BJ (cell line): ENCODE measurements at regions of chr9 and their contacts with region 1.

Region 1: DNA sequence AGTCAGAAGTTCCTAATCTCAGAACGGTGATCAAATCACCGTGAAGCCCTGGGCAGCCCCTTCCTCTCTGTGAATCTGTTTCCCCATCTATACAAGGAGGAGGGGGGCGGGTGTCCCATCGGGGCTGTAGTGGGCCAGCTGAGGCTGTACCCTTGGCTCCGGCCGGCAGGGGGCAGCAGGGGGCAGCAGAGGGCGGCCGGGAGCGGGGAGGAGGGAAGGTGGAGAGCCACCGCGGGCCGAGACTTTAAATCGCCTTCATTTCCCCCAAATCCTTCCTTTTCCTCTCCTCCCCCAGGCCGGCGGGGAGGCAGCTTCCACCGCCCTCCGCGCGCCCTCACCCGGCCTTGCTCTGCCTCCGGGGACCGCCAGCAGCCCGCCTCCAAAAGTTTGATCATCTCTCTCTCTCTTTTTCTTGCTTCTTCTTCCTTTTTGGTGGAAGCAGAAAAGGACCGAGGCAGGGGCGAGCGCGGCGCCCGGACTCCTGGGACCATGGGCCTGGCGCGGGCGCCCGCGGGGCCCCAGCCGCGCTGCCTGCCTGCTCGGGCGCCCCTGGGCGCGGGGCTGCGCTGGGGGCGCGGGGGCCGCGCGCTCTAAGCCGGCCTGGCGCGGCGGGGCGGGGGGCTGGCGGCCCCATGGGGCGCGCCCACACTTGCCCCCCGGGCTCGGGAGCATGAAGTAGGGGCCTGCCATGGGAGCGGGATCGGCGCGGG is at the start of gene COL27A1:
- DNase-seq: no peak
- H3K4me3 ChIP-seq: peak within 1 kb of the TSS; percentile 66
- H3K27me3 ChIP-seq: peaks cover 12% of the 10 kb centered on the region
- CTCF ChIP-seq: peak; percentile 94
- polyA plus RNA-seq, gene COL27A1: 11.6 and 16.6 TPM in 2 replicates

Region 2: DNA sequence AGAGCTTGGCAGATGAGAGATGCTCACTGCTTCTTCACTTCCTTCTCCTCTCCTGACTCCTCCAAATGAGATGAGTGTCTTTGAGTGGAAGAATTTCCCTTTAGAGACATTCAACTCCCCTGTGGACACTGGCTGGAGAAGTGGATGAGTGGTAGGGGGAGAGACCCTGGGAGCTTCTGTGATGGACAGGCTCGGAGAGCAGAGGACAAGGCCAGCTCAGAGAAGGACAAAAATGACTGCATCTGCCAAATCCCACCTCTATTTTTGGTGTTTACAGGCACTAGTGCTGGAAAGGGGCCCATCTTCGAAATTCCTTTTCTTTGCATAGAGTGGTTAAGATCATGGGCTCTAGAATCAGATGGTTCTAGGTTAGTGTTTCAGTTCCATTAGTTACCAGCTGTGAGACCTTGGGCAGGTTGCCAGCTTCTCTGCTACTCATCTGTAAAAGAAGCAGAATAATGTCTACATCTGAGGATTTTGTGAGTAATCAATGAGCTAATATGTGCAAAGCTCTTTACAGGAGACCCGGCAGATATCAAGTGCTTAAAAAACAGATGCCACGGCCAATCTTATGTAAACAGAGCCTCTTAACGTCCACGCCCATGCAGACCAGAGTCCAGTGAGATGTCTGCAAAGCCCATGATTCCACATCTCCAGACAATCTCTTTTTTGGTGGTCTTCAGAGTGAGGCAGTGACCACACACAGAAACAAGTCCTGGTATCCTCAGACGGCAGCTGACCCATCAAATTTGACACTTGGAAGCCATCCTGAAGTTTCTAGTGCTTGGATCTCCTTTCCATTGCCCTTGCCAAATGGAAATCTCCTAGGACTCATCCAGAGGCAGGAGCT is 13.6 kb before region 1 on chr9:
- CTCF ChIA-PET with region 1: interaction called, 50 read pairs
- POLR2A ChIA-PET with region 1: interaction called, 3 read pairs
- DNase-seq: no peak
- H3K4me3 ChIP-seq: no peak overlapping the region
- H3K27me3 ChIP-seq: peaks cover 32% of the 10 kb centered on the region
- CTCF ChIP-seq: no peak

Region 3: DNA sequence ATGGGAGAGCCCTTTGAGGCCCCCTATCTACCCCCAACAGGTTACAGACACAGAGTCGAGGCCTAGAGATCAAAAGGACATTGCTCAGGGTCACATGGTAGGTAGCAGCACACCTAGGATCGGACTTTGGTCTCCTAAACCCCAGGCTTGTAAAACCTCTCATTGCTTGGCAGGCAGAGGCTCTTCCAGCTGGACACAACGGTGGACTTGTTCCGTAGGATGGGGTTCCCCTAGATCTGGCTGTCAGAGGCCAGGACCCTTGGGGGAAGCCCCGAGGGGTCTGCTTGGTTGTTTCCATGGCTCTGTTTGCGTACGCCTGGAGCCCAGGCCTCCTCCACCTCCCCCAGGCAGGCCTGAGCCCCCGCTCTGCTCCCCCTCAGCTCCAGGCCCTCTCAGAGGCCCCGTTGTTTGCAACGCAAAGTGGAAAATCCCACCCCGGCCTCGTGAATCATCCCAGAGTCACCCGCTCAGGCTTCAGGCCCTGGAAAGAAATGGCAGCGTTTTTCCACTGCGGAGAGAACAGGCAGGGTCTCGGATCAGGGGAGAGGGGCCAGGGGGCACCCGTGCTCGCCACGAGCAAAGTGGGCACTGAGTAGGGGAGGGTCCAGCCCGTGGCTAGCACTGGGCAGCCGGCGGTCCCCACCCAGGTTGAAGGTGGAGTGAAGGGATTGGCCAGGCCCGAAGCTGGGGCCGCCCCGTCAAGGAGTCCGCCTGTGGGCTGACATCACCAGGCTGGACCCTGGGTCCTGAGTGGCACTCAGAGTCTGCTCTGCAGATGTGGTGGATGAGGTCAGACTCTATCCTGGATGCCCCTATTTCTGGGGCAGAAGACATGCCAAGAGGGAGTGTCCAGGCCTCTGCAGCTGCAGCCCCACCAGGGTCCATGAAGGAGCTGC is 19.7 kb after region 1 on chr9:
- CTCF ChIA-PET with region 1: interaction called, 42 read pairs
- POLR2A ChIA-PET with region 1: no interaction called
- DNase-seq: no peak
- H3K4me3 ChIP-seq: no peak overlapping the region
- H3K27me3 ChIP-seq: no peaks in the 10 kb centered on the region
- CTCF ChIP-seq: no peak

Region 4: GRCh38 chr9:114271641-114272081 is 116.2 kb after region 1 on chr9:
- CTCF ChIA-PET with region 1: interaction called, 19 read pairs
- POLR2A ChIA-PET with region 1: no interaction called
- DNase-seq: no peak
- H3K4me3 ChIP-seq: no peak overlapping the region
- H3K27me3 ChIP-seq: no peaks in the 10 kb centered on the region
- CTCF ChIP-seq: no peak

Region 5: GRCh38 chr9:114291064-114291474 is 135.7 kb after region 1 on chr9:
- CTCF ChIA-PET with region 1: interaction called, 73 read pairs
- POLR2A ChIA-PET with region 1: no interaction called
- DNase-seq: no peak
- H3K4me3 ChIP-seq: no peak overlapping the region
- H3K27me3 ChIP-seq: no peaks in the 10 kb centered on the region
- CTCF ChIP-seq: peak; percentile 82